Common myeloid progenitor, CD34-positive (primary cell): ENCODE measurements at regions of chr11 and their contacts with region 1.

Region 1: GRCh38 chr11:57335343-57336110 is at the start of gene SSRP1:
- DNase-seq: peak; percentile 89 to 92 (median 90)
- H3K4me3 ChIP-seq: peak within 1 kb of the TSS; percentile 61 to 83 (median 77)
- H3K27ac ChIP-seq: peak within 1 kb of the TSS; percentile 55 to 81
- H3K4me1 ChIP-seq: peaks cover 5 to 24% (median 17%) of the 10 kb centered on the region in 4 experiments
- H3K27me3 ChIP-seq: peaks cover 0 to 2% (median 0%) of the 10 kb centered on the region in 5 experiments

Region 2: GRCh38 chr11:57324886-57325734 is 10.4 kb before region 1 on chr11 and contains the start of gene TNKS1BP1:
- CTCF ChIA-PET with region 1: interaction called, 14 read pairs
- POLR2A ChIA-PET with region 1: interaction called, 4 read pairs
- DNase-seq: peak; percentile 90 to 95 (median 92)
- H3K4me3 ChIP-seq: peak within 1 kb of the TSS; percentile 56 to 90 (median 74)
- H3K27ac ChIP-seq: peak within 1 kb of the TSS; percentile 58 to 86
- H3K4me1 ChIP-seq: peaks cover 2 to 36% (median 26%) of the 10 kb centered on the region in 4 experiments
- H3K27me3 ChIP-seq: no peaks in the 10 kb centered on the region

Region 3: GRCh38 chr11:57345555-57346211 is 10.2 kb after region 1 on chr11:
- CTCF ChIA-PET with region 1: interaction called, 18 read pairs
- POLR2A ChIA-PET with region 1: no interaction called
- DNase-seq: peak; percentile 60 to 71 (median 61)
- H3K4me3 ChIP-seq: no peak overlapping the region
- H3K27ac ChIP-seq: no peak overlapping the region
- H3K4me1 ChIP-seq: peaks cover 0 to 11% (median 2%) of the 10 kb centered on the region in 4 experiments
- H3K27me3 ChIP-seq: no peaks in the 10 kb centered on the region

Region 4: DNA sequence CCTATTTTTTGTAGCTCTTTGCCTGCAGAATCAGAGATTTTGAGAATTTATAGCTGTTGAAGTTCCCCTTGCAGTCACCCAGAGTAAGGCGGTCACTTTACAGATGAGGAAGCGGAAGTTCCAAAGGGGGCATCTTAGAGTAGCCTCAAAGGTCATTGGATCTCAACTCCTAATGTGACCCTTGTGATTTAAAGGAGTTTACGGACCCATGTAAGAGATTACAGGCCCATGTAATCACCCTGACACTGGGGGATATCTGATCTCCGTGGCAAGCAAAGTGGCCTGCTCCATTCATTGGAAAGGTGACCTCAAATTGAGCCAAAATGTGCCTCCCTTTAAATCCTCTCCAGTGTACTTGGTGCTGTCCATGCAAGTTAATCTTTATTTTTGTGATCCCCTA is 18.3 kb after region 1 on chr11:
- CTCF ChIA-PET with region 1: interaction called, 18 read pairs
- POLR2A ChIA-PET with region 1: interaction called, 4 read pairs
- DNase-seq: peak in 2 of 3 donors; percentile 59 to 66
- H3K4me3 ChIP-seq: peak overlapping the region in 2 of 7 experiments; percentile 28 to 50
- H3K27ac ChIP-seq: peak overlapping the region; percentile 51 to 56
- H3K4me1 ChIP-seq: peaks cover 26 to 68% (median 57%) of the 10 kb centered on the region in 4 experiments
- H3K27me3 ChIP-seq: no peaks in the 10 kb centered on the region